Activated B cell treated with CpG ODN at 0.5 μM for 24 hours (primary cell): ENCODE measurements at regions of chr5 and their contacts with region 1.

Region 1: GRCh38 chr5:124642151-124642550 is 104.3 kb downstream of the ZNF608 start:
- DNase-seq: no peak
- ATAC-seq: no peak
- H3K4me3 Mint-ChIP-seq: no peak overlapping the region
- H3K27ac Mint-ChIP-seq: no peak overlapping the region
- H3K4me1 Mint-ChIP-seq: peaks cover 34% of the 10 kb centered on the region
- H3K27me3 Mint-ChIP-seq: no peaks in the 10 kb centered on the region
- CTCF ChIP-seq: no peak

Region 2: DNA sequence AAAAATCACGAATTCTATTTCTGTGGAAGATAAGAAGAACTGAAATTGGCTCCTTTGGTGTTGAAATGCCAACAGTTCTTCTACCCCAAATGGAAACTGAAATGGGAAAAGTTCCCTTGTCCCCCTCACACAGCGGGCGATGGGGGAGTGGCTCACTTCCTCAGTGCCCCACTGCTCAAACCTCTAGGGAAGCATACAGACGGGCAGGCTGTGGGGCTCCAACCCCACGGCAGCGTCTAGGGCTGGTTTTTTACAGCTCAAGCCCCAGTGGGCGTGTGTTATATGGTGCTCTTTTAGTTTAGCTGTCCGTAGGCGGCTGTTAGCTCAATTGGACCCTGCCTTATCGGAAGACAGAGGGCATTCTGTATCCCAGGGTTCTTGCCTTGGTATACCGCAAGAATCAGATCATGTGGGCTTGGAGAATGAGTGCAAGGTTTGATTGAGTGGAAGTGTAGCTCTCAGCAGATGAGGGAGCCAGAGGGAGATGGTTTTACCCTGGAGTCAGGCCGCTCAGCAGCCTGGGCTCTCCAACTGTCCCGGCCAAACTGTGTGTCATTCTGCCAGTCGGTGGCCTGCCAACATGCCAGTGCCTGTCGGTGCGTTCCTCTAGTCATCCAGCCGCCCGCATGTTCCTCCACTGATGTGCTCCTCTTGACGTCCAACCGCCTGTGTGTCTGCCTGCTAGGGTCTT is 270.6 kb after region 1 on chr5:
- CTCF ChIA-PET with region 1: no interaction called
- POLR2A ChIA-PET with region 1: no interaction called
- intact Hi-C with region 1: no loop called
- DNase-seq: no peak
- ATAC-seq: peak; percentile 54
- H3K4me3 Mint-ChIP-seq: peak overlapping the region; percentile 45
- H3K27ac Mint-ChIP-seq: no peak overlapping the region
- H3K4me1 Mint-ChIP-seq: peaks cover 33% of the 10 kb centered on the region
- H3K27me3 Mint-ChIP-seq: no peaks in the 10 kb centered on the region
- CTCF ChIP-seq: no peak

Region 3: DNA sequence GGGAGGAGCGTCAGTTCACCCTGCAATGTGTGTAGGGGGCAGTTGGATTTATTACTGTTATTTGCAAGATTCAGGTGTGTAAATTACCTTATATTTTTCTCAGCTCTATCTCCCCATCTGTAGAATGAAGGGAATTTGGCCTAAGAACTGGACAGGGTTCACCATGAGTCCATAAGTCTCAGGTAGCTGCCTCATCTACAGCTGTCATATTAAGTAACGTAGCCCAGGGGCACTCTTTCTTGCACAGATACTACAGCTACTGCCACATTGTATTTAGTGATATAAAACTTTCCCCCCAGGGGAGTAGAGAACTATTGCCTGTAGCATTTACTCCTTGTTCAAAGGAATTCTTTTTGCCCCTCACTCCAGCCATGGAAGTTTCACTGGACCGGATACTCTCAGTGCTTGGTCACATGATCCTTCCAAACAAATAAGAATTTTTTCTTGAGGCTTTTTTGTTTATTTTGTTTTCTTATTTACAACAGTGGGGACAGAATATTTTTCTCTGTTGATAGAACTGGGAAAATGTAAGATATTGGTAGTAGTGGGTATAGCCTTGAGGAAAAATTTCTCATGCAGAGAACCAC is 405.8 kb after region 1 on chr5:
- CTCF ChIA-PET with region 1: no interaction called
- POLR2A ChIA-PET with region 1: interaction called, 13 read pairs
- intact Hi-C with region 1: no loop called
- DNase-seq: no peak
- ATAC-seq: no peak
- H3K4me3 Mint-ChIP-seq: no peak overlapping the region
- H3K27ac Mint-ChIP-seq: no peak overlapping the region
- H3K4me1 Mint-ChIP-seq: no peaks in the 10 kb centered on the region
- H3K27me3 Mint-ChIP-seq: no peaks in the 10 kb centered on the region
- CTCF ChIP-seq: no peak